Heart left ventricle (tissue), 16 donors: ENCODE measurements at regions of chr10 and their contacts with region 1.

Region 1: GRCh38 chr10:34666008-34666705 is 148.9 kb downstream of the PARD3 start:
- DNase-seq: peak in 1 of 5 donors; percentile 36
- ATAC-seq: peak in 3 of 4 donors; percentile 80 to 85 (median 84)
- H3K4me3 ChIP-seq: no peak overlapping the region
- H3K27ac ChIP-seq: no peak overlapping the region
- H3K4me1 ChIP-seq: peaks cover 0 to 23% (median 2%) of the 10 kb centered on the region in 12 donors
- H3K27me3 ChIP-seq: no peaks in the 10 kb centered on the region
- CTCF ChIP-seq: peak; percentile 28 to 67 (median 54)
- POLR2A ChIP-seq: no peak

Region 2: DNA sequence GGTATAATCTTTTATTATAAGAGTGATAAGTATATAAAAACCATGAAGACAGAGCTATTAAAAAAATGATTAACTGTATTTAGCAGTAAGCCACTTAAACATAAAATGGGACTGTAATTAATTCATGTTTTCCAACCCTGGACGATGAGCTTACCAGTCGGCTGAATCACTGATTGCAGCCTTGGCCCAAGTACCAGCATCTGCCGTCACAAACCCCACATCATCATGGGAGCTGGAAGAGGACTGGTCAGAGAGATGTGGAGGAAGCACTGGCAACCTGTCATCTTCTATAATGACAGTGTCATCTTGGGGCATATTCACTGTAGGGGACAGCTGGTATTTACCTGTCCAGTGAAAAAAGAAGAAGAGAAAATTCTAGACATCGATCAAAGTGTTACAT is 324.7 kb before region 1 on chr10:
- intact Hi-C with region 1: no loop called
- DNase-seq: no peak
- ATAC-seq: peak in 1 of 4 donors; percentile 67
- H3K4me3 ChIP-seq: peak overlapping the region in 1 of 12 donors; percentile 35
- H3K27ac ChIP-seq: no peak overlapping the region
- H3K4me1 ChIP-seq: peaks cover 0 to 23% (median 1%) of the 10 kb centered on the region in 12 donors
- H3K27me3 ChIP-seq: no peaks in the 10 kb centered on the region
- CTCF ChIP-seq: no peak
- POLR2A ChIP-seq: no peak

Region 3: GRCh38 chr10:34702093-34702937 is 36.2 kb after region 1 on chr10:
- intact Hi-C with region 1: no loop called
- DNase-seq: no peak
- ATAC-seq: peak in 1 of 4 donors; percentile 40
- H3K4me3 ChIP-seq: no peak overlapping the region
- H3K27ac ChIP-seq: peak overlapping the region in 7 of 12 donors; percentile 3 to 74 (median 22)
- H3K4me1 ChIP-seq: peaks cover 2 to 78% (median 35%) of the 10 kb centered on the region in 12 donors
- H3K27me3 ChIP-seq: no peaks in the 10 kb centered on the region
- CTCF ChIP-seq: no peak
- POLR2A ChIP-seq: no peak

Region 4: GRCh38 chr10:34739915-34740314 is 73.8 kb after region 1 on chr10:
- intact Hi-C with region 1: no loop called
- DNase-seq: peak; percentile 48 to 69 (median 55)
- ATAC-seq: peak in 3 of 4 donors; percentile 59 to 64 (median 63)
- H3K4me3 ChIP-seq: peak overlapping the region in 7 of 12 donors; percentile 0 to 28 (median 19)
- H3K27ac ChIP-seq: peak overlapping the region in 4 of 12 donors; percentile 25 to 39 (median 38)
- H3K4me1 ChIP-seq: peaks cover 0 to 35% (median 22%) of the 10 kb centered on the region in 12 donors
- H3K27me3 ChIP-seq: no peaks in the 10 kb centered on the region
- CTCF ChIP-seq: no peak
- POLR2A ChIP-seq: no peak

Region 5: DNA sequence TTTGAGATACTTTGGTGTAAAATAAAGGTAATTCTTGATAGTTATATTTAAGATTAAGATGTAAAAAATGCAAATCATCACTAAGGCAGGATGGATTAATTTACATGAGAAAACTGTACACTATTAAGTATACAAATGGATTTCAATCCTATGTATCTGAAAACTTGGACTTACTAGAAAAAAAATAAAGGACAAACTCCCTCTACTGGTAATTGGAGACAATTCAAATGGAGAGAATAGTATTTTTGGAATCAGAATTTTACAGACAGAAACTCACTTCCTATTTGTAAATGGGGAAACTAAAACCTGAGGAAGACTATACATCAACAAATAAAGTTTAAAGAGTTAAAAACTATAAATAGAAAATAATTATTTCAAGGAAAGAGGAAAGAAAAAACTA is 361.4 kb after region 1 on chr10:
- intact Hi-C with region 1: loop called in 5 of 10 experiments (anchors 5 to 10 kb)
- DNase-seq: no peak
- ATAC-seq: no peak
- H3K4me3 ChIP-seq: no peak overlapping the region
- H3K27ac ChIP-seq: no peak overlapping the region
- H3K4me1 ChIP-seq: no peaks in the 10 kb centered on the region
- H3K27me3 ChIP-seq: no peaks in the 10 kb centered on the region
- CTCF ChIP-seq: peak in 11 of 12 donors; percentile 12 to 57 (median 39)
- POLR2A ChIP-seq: no peak